Tibial artery (tissue), 4 donors: ENCODE measurements at regions of chr6 and their contacts with region 1.

Region 1: DNA sequence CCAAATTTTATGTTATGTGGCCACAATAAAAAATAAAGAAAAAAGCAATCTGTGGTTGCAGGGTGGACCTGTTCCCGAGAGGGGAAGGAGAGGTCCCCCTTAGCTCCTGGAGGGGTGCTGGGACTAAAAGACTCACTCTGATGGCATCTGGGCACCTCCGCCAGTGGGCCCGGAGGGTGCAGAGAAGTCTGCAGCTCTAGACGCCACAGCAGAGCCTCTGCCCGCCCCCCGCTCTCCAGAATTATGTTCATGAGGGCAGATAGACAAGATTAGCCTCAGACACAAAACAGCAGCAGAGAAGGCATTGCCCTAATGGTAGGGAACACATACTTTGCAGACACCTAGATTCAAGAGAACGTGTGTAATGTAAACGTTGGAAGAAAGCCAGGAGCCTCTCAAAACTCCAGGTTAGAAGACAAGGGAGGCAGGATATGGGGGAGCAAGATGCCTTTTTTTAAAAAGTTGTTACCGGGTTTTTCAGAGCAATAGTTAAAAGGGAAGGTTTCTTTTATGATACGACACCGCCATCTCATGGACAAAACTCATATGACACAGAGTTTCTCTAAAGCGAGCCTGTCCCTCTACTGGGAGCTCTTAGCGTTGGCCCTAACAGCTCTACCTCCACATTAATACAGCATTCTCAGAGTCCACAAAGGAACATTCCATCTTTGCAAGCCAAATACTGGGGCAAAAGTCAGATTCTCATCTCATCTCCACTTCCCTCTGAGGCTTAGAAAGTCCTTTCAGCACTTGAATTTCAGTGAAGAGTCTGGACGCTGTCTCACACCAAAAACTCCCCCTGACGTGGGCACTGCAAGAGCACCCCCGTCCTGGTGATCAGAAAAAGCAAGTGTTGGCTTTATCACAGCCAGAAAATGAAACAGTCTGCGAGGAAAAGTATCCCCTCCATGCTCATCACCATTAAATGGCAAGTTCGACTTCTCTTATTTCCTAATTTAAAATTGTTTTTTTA is 47.2 kb downstream of the FOXF2 start:
- DNase-seq: no peak
- H3K4me3 ChIP-seq: no peak overlapping the region
- H3K27ac ChIP-seq: no peak overlapping the region
- H3K4me1 ChIP-seq: no peaks in the 10 kb centered on the region
- H3K27me3 ChIP-seq: peaks cover 0 to 37% of the 10 kb centered on the region in 2 donors
- CTCF ChIP-seq: peak; percentile 80 to 83

Region 2: DNA sequence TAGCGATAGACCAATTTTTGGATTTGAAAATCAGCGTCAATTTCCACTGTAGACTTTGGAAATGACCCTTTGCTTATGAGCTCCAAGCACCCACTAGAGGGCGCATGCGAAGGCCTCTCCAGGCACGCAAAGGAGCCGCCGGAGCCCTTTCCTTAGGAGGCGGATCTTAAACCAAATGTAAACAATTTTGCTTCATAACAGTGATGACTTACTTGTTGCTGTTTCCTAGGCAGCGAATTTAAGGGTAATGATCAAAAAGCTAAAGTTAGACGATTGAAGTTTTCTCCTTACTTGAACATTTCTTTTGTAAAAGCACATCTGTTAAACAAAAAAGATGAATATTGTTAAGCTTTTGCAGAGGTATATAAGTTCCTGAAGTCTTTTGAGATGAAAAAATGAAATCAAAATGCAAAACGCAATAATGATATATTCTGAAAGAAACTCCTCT is 714.5 kb before region 1 on chr6:
- intact Hi-C with region 1: loop called (anchors 2 kb)
- DNase-seq: peak; percentile 70 to 79
- H3K4me3 ChIP-seq: no peak overlapping the region
- H3K27ac ChIP-seq: no peak overlapping the region
- H3K4me1 ChIP-seq: peaks cover 0 to 5% (median 0%) of the 10 kb centered on the region in 4 donors
- H3K27me3 ChIP-seq: peaks cover 0 to 7% of the 10 kb centered on the region in 2 donors
- CTCF ChIP-seq: peak; percentile 63 to 85